CD4-positive, alpha-beta memory T cell (primary cell): ENCODE measurements at regions of chr6 and their contacts with region 1.

Region 1: GRCh38 chr6:129774697-129775447 is 64.9 kb upstream of the ARHGAP18 start:
- DNase-seq: peak; percentile 27 to 44 (median 32)
- H3K4me3 ChIP-seq: no peak overlapping the region
- H3K4me3 Mint-ChIP-seq: no peak overlapping the region
- H3K27ac ChIP-seq: no peak overlapping the region
- H3K27ac Mint-ChIP-seq: no peak overlapping the region
- H3K4me1 ChIP-seq: no peaks in the 10 kb centered on the region
- H3K4me1 Mint-ChIP-seq: no peaks in the 10 kb centered on the region
- H3K27me3 ChIP-seq: no peaks in the 10 kb centered on the region
- H3K27me3 Mint-ChIP-seq: no peaks in the 10 kb centered on the region

Region 2: DNA sequence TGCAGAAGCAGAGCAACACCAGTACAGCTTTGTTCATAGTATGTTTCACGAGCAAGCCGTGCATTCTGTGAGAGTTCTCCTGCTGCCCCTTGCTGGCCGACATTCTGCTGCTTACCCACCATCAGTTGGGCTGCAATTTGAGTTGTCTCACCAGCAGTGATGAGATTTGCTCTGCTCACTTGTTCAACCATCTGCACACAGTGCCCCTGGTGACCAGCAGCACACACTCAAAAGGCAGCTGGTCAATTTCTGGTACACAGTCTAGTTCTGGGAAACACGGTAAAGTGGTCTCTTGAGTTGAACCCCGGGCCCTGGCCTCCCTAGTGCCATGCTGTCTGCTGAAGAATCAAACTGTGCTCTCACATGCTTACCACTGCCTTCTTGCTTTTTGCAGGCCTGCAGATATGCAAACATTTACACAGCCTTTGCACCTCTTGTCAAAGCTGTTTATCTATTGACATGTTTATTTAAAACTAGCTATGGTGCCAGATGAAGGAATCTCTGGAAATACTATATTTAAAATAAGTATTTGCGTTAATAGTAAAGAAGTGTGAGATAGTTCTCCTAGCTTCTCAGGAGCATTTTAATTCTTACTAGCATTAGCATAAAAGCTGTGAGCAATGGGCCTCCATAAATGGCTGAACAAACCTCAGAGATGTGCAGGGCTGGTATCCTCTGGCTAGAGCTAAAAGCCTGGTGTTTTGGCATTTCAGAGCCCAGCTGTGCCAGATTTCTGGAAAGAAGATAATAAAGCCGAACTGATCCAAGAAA is 299.2 kb before region 1 on chr6:
- CTCF ChIA-PET with region 1: no interaction called
- POLR2A ChIA-PET with region 1: no interaction called
- intact Hi-C with region 1: no loop called
- DNase-seq: no peak
- H3K4me3 ChIP-seq: no peak overlapping the region
- H3K4me3 Mint-ChIP-seq: no peak overlapping the region
- H3K27ac ChIP-seq: no peak overlapping the region
- H3K27ac Mint-ChIP-seq: no peak overlapping the region
- H3K4me1 ChIP-seq: no peaks in the 10 kb centered on the region
- H3K4me1 Mint-ChIP-seq: peaks cover 0 to 1% (median 0%) of the 10 kb centered on the region in 4 donors
- H3K27me3 ChIP-seq: no peaks in the 10 kb centered on the region
- H3K27me3 Mint-ChIP-seq: no peaks in the 10 kb centered on the region

Region 3: GRCh38 chr6:129539032-129539431 is 235.8 kb before region 1 on chr6:
- CTCF ChIA-PET with region 1: no interaction called
- POLR2A ChIA-PET with region 1: no interaction called
- intact Hi-C with region 1: no loop called
- DNase-seq: no peak
- H3K4me3 ChIP-seq: no peak overlapping the region
- H3K4me3 Mint-ChIP-seq: no peak overlapping the region
- H3K27ac ChIP-seq: no peak overlapping the region
- H3K27ac Mint-ChIP-seq: no peak overlapping the region
- H3K4me1 ChIP-seq: no peaks in the 10 kb centered on the region
- H3K4me1 Mint-ChIP-seq: no peaks in the 10 kb centered on the region
- H3K27me3 ChIP-seq: no peaks in the 10 kb centered on the region
- H3K27me3 Mint-ChIP-seq: no peaks in the 10 kb centered on the region

Region 4: DNA sequence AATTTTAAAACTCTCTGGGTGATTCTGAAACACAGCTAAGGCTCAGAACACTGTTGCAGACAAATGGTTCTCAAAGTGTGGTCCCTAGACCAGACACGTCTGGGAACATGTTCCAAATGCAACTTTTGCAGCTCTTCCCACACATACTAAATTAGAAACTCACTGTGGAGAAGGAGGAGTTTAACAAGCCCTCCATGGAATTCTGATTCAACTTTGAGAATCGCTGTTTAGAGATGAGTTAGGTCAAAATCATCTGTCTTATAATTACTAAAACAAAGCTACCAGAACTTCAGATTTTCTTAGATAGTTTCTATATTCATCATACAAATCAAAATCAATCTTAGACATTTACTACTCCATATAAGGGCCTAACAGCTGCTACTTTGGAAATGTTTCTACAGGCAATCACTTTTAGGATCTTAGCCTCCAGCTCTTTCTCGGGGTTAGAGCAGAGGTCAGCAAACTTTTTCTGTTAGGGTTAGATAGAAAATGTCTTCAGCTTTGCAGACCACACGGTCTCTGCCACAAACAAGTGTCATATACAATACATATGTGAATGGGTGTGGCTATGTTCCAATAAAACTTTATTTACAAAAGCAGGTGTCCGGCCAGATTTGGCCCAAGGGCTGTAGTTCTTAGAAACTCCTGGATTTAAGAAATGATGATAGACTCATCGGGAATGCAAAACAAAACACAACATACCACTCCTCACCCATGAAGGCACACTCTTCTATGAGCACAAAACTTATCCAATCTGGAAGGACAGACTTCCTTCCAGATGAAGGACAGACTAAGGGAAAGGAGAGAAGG is 14.9 kb before region 1 on chr6:
- CTCF ChIA-PET with region 1: interaction called, 14 read pairs
- POLR2A ChIA-PET with region 1: no interaction called
- intact Hi-C with region 1: no loop called
- DNase-seq: no peak
- H3K4me3 ChIP-seq: no peak overlapping the region
- H3K4me3 Mint-ChIP-seq: no peak overlapping the region
- H3K27ac ChIP-seq: no peak overlapping the region
- H3K27ac Mint-ChIP-seq: no peak overlapping the region
- H3K4me1 ChIP-seq: no peaks in the 10 kb centered on the region
- H3K4me1 Mint-ChIP-seq: no peaks in the 10 kb centered on the region
- H3K27me3 ChIP-seq: no peaks in the 10 kb centered on the region
- H3K27me3 Mint-ChIP-seq: peaks cover 0 to 15% of the 10 kb centered on the region in 2 donors

Region 5: GRCh38 chr6:129785047-129785755 is 10.3 kb after region 1 on chr6:
- CTCF ChIA-PET with region 1: interaction called, 11 read pairs
- POLR2A ChIA-PET with region 1: no interaction called
- intact Hi-C with region 1: no loop called
- DNase-seq: no peak
- H3K4me3 ChIP-seq: no peak overlapping the region
- H3K4me3 Mint-ChIP-seq: no peak overlapping the region
- H3K27ac ChIP-seq: no peak overlapping the region
- H3K27ac Mint-ChIP-seq: no peak overlapping the region
- H3K4me1 ChIP-seq: no peaks in the 10 kb centered on the region
- H3K4me1 Mint-ChIP-seq: no peaks in the 10 kb centered on the region
- H3K27me3 ChIP-seq: no peaks in the 10 kb centered on the region
- H3K27me3 Mint-ChIP-seq: peaks cover 0 to 7% of the 10 kb centered on the region in 2 donors